ENCODE measurements at regions of chr15 and their contacts with region 1.

Region 1: DNA sequence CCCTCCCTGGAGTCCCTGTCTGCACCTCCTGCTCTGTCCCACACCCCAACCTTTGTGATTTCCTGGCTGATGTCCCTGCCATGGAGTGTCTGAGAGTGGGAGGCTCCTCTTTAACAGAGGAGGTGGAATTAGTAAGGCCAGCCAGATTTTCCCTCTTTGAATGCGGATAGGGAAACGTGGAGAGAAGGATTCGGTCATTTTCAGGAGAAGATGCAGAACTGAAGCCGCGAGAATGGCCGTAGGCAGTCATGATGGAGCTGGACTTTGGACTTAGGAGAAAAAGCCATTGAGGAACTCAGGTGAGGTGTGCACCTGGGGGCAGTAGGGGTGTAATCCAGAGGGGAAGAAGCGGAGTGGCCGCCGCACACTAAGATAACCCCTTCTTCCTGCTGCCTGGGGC is 138.1 kb upstream of the ATP10A start:
- DNase-seq: no peak
- ATAC-seq: no peak

Region 2: DNA sequence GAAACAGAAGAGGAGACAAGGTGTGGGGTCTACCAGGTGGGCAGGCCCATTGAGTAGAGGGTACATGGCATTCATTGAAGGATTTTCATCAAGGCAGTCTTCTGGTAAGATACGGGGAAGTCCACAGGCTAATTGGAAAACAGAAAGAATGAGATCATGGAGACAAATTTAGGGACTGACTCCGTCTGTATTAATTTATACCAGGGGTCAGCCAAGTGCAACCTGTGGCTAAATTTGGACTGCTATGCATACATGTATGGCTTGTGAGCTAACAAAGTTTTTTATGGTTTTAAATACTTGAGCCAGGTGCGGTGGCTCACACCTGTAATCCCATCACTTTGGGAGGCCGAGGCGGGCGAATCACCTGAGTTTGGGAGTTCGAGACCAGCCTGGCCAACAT is 1067.5 kb before region 1 on chr15:
- intact Hi-C with region 1: loop called (anchors 10 kb)
- DNase-seq: no peak
- ATAC-seq: no peak

Measured in sciatic nerve (tissue), 2 donors.